ENCODE measurements at regions of chr14 and their contacts with region 1.

Region 1: GRCh38 chr14:81990312-81990761 is 456.7 kb upstream of the SEL1L start:
- DNase-seq: peak; percentile 61
- ATAC-seq: no peak
- H3K4me3 Mint-ChIP-seq: no peak overlapping the region
- H3K27ac Mint-ChIP-seq: no peak overlapping the region
- H3K4me1 Mint-ChIP-seq: no peaks in the 10 kb centered on the region
- H3K27me3 Mint-ChIP-seq: peaks cover 7% of the 10 kb centered on the region

Region 2: DNA sequence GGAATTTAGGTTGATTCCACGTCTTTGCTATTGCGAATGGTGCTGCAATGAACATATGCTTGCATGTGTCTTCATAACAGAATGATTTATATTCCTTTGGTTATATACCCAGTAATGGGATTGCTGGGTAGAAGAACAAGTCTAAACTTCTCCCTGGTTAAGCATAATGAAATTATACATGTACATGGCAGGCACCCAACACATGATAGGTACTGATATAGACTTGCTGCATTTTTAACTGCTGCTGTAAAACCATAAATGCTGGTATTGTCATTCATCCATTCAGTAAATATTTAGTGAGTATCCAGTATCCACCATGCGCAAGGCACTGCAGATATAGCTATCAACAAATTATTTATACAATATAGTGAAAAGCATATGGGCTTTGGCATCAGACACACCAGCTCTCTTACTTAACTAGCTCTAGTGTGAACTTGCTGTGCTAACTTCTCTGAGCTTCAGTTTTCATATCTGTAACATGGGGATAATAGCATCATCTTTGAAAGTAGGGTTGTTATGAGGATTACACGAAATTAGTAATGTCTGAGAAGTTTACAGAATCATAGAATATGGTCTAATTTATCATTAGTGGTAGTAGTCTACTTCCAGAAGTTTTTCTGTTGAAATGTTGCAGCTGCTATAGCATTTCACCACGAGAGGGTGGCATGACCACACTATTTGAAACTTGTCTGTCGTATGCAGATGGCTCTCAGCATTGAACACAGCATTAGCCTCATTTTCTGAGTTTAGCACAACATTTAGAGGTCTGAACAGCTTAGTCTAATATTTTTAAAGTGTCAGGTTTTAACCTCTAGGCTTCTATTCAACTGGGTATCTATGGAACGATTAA is 424.7 kb before region 1 on chr14:
- CTCF ChIA-PET with region 1: no interaction called
- POLR2A ChIA-PET with region 1: no interaction called
- intact Hi-C with region 1: loop called in 1 of 2 experiments (anchors 5 kb)
- DNase-seq: peak; percentile 39
- ATAC-seq: no peak
- H3K4me3 Mint-ChIP-seq: no peak overlapping the region
- H3K27ac Mint-ChIP-seq: no peak overlapping the region
- H3K4me1 Mint-ChIP-seq: no peaks in the 10 kb centered on the region
- H3K27me3 Mint-ChIP-seq: peaks cover 10% of the 10 kb centered on the region

Region 3: GRCh38 chr14:81625343-81625742 is 365.0 kb before region 1 on chr14:
- CTCF ChIA-PET with region 1: no interaction called
- POLR2A ChIA-PET with region 1: no interaction called
- intact Hi-C with region 1: loop called in 1 of 2 experiments (anchors 1 kb)
- DNase-seq: no peak
- ATAC-seq: no peak
- H3K4me3 Mint-ChIP-seq: no peak overlapping the region
- H3K27ac Mint-ChIP-seq: no peak overlapping the region
- H3K4me1 Mint-ChIP-seq: no peaks in the 10 kb centered on the region
- H3K27me3 Mint-ChIP-seq: peaks cover 3% of the 10 kb centered on the region

Region 4: DNA sequence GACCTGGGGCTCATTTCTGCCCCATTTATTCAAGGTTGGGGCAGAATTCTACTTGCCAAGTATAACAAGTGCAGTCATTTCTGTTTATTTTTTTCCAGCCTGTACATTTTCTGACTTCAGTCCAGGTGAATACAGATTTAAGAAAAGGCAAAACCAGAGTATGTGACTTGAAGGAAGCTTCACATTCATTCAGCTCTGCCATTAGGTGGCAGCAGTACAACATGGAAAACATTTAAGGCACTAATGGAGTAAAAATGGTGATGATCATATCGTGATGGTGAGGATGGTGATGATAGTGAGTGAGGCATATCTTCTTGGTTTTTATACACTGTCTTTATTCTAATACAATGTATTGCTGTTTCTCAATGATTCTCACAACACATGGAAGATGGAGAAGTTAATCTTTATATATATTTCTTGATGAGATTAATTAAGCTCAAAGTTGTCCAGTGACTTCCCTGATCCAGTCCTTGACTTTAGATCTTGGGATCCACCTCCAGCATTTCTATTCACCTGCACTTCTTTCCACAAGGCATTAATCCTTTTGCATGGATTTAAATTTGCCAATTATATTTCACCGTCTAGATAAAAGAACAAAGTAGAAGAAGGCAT is 280.0 kb before region 1 on chr14:
- CTCF ChIA-PET with region 1: interaction called, 6 read pairs
- POLR2A ChIA-PET with region 1: no interaction called
- intact Hi-C with region 1: loop called in 1 of 2 experiments (anchors 5 kb)
- DNase-seq: peak; percentile 15
- ATAC-seq: no peak
- H3K4me3 Mint-ChIP-seq: no peak overlapping the region
- H3K27ac Mint-ChIP-seq: no peak overlapping the region
- H3K4me1 Mint-ChIP-seq: no peaks in the 10 kb centered on the region
- H3K27me3 Mint-ChIP-seq: peaks cover 2% of the 10 kb centered on the region

Region 5: GRCh38 chr14:81837304-81837703 is 153.0 kb before region 1 on chr14:
- CTCF ChIA-PET with region 1: no interaction called
- POLR2A ChIA-PET with region 1: no interaction called
- intact Hi-C with region 1: no loop called
- DNase-seq: no peak
- ATAC-seq: no peak
- H3K4me3 Mint-ChIP-seq: no peak overlapping the region
- H3K27ac Mint-ChIP-seq: no peak overlapping the region
- H3K4me1 Mint-ChIP-seq: no peaks in the 10 kb centered on the region
- H3K27me3 Mint-ChIP-seq: no peaks in the 10 kb centered on the region

Region 6: GRCh38 chr14:82003426-82003825 is 13.1 kb after region 1 on chr14:
- CTCF ChIA-PET with region 1: interaction called, 10 read pairs
- POLR2A ChIA-PET with region 1: no interaction called
- intact Hi-C with region 1: no loop called
- DNase-seq: no peak
- ATAC-seq: no peak
- H3K4me3 Mint-ChIP-seq: no peak overlapping the region
- H3K27ac Mint-ChIP-seq: no peak overlapping the region
- H3K4me1 Mint-ChIP-seq: no peaks in the 10 kb centered on the region
- H3K27me3 Mint-ChIP-seq: no peaks in the 10 kb centered on the region

Region 7: GRCh38 chr14:82046512-82047226 is 56.3 kb after region 1 on chr14:
- CTCF ChIA-PET with region 1: no interaction called
- POLR2A ChIA-PET with region 1: no interaction called
- intact Hi-C with region 1: no loop called
- DNase-seq: no peak
- ATAC-seq: no peak
- H3K4me3 Mint-ChIP-seq: no peak overlapping the region
- H3K27ac Mint-ChIP-seq: no peak overlapping the region
- H3K4me1 Mint-ChIP-seq: no peaks in the 10 kb centered on the region
- H3K27me3 Mint-ChIP-seq: no peaks in the 10 kb centered on the region

Region 8: GRCh38 chr14:82710267-82710841 is 720.0 kb after region 1 on chr14:
- CTCF ChIA-PET with region 1: no interaction called
- POLR2A ChIA-PET with region 1: no interaction called
- intact Hi-C with region 1: loop called in 1 of 2 experiments (anchors 5 kb)
- DNase-seq: peak; percentile 69
- ATAC-seq: no peak
- H3K4me3 Mint-ChIP-seq: no peak overlapping the region
- H3K27ac Mint-ChIP-seq: no peak overlapping the region
- H3K4me1 Mint-ChIP-seq: no peaks in the 10 kb centered on the region
- H3K27me3 Mint-ChIP-seq: no peaks in the 10 kb centered on the region

Measured in activated CD4-positive, alpha-beta T cell treated with anti-CD3 and anti-CD28 coated beads for 36 hours (primary cell).